Activated T-helper 2 cell treated with anti-CD3 and anti-CD28 coated beads, Interferon-gamma antibody, Interleukin-2, Interleukin-4, amounts not matched to agents 10 μg/mL and 5 μg/mL and 100 μg/mL, durations not matched to agents 14 hours and 24 hours and 36 hours (primary cell): ENCODE measurements at regions of chr4 and their contacts with region 1.

Region 1: DNA sequence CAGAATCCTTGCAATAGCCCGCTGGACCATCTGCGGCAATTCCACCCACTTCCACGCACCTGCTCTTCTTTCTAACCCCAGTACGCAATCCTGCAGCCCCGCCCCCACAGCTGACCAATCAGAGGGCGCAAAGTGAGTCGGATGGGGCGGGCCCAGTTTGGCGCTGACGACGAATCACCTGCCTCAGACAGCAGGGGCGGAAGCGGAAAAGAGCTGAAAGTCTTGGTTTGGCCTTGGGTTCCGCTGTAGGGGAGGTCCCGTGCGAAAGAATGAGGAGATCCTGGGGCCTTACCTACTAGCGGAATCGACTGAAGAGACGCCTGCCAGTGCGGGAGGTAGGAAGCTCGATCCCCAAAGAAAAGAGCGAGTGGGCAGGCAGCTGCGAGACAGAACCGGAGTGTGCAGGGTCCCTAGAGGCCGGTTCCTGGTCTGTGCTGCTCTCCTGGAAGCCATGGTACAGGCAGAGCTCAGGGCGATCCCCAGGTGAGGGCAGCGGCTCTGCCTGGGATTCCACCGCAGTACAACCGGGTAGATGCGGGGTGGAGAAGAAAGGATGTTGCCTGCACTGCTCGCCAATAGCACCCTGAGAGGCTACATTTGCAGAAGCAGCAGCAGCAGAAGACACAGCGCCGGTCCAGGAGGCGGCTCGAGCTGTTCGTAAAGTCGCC is at the start of gene TMEM184C:
- DNase-seq: peak; percentile 97
- H3K4me3 Mint-ChIP-seq: peak within 1 kb of the TSS; percentile 99
- H3K27ac Mint-ChIP-seq: peak within 1 kb of the TSS; percentile 98
- H3K4me1 Mint-ChIP-seq: peaks cover 19% of the 10 kb centered on the region
- H3K27me3 Mint-ChIP-seq: peaks cover 15% of the 10 kb centered on the region
- total RNA-seq, gene TMEM184C: 20.4 and 22.0 TPM in 2 replicates

Region 2: DNA sequence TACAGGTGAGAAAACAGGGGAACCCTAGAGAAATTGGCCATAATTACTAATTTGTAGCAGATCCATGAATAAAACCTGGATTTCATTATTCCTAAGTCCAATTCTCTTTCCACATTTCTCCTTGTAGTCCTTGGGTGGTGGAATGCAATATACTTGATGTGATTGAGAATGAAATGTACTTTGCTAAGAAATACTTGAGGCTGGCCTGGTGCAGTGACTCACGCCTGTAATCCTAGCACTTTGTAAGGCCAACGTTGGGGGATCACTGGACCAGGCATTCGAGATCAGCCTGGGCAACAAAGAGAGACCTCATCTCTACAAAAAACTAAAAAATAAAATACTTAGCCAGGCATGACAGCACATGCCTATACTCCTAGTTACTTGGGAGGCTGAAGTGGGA is 15.8 kb after region 1 on chr4:
- intact Hi-C with region 1: loop called (anchors 1 kb)
- DNase-seq: no peak
- H3K4me3 Mint-ChIP-seq: no peak overlapping the region
- H3K27ac Mint-ChIP-seq: no peak overlapping the region
- H3K4me1 Mint-ChIP-seq: no peaks in the 10 kb centered on the region
- H3K27me3 Mint-ChIP-seq: no peaks in the 10 kb centered on the region

Region 3: GRCh38 chr4:147683717-147684700 is 66.7 kb after region 1 on chr4 and contains the start of gene PRMT9:
- intact Hi-C with region 1: loop called (anchors 1 kb)
- DNase-seq: peak; percentile 84
- H3K4me3 Mint-ChIP-seq: peak within 1 kb of the TSS; percentile 93
- H3K27ac Mint-ChIP-seq: peak within 1 kb of the TSS; percentile 93
- H3K4me1 Mint-ChIP-seq: peaks cover 26% of the 10 kb centered on the region
- H3K27me3 Mint-ChIP-seq: peaks cover 3% of the 10 kb centered on the region
- total RNA-seq, gene PRMT9: 8.4 and 8.9 TPM in 2 replicates

Region 4: DNA sequence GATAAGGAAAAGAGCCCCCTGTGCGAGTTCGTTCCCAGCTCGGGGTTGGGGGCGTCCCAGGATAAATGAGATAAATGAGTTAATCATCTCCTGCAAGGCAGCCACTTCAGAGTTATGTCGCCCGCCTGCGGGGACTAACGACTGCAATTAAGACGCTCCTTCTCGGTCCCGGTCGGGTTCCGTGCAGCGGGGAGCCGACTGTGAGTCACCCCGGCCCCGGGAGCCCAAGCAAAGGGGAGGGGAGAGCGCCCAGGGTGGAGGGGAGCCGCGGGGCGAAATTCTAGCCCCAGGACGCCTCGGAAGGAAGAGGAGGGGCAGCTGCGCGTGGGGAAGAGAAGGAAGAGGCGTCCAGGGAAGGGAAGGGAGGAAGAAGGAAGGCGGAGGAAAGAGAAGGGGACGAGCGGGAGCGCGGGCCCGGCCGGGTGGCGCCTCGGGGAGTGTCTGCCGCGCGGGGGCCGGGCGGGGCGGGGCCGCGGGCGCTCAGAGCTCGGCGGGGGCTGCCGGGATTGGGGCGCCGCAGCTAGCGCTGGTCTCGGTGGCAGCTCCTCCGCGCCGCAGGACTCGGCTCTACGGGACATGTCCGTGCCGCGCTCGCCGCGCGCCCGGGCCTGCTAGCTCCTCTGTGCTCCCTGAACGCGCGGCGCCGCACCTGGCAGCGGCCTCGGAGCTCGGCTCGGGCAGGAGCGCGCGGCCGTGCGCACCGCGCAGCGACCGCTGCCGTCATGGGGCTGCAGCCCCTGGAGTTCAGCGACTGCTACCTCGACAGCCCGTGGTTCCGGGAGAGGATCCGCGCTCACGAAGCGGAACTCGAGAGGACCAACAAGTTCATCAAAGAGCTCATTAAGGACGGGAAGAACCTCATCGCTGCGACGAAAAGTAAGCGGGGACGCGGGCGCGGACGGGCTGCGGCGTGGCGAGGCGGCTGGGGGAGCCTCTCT is 114.5 kb after region 1 on chr4 and contains the start of gene ARHGAP10:
- intact Hi-C with region 1: loop called (anchors 1 kb)
- DNase-seq: peak; percentile 59
- H3K4me3 Mint-ChIP-seq: peak within 1 kb of the TSS; percentile 96
- H3K27ac Mint-ChIP-seq: peak within 1 kb of the TSS; percentile 91
- H3K4me1 Mint-ChIP-seq: peaks cover 44% of the 10 kb centered on the region
- H3K27me3 Mint-ChIP-seq: peaks cover 18% of the 10 kb centered on the region
- total RNA-seq, gene ARHGAP10: 18.5 TPM in 2 replicates

Region 5: DNA sequence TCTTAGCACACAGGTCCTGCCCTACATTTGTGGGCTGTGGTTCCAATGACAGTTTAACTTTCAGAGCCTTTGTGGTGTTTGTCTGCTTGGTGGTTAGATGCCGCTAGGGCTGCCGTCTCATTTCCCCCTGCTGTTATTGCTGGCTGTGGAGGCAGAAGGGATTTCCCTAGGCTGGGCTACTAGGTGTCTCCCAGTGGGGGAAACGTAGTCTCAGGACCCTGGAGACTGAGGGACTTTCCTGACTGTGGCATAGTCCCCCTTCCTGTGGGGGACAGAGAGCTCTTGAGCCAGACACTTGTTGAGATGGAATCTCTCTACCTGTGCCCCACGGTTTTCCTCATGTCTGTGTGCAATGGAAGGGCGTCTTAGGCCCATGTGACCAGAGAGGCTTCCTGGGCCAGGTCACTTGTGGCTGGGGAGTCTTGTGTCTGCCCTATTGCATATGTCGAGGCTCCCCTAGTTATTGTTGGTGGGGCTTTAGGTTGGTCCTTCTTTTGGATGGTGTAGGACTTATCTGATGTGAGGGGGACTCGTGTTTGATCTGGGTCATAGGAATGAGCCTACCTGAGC is 182.8 kb after region 1 on chr4:
- intact Hi-C with region 1: loop called (anchors 10 kb)
- DNase-seq: peak; percentile 70
- H3K4me3 Mint-ChIP-seq: peak overlapping the region; percentile 67
- H3K27ac Mint-ChIP-seq: peak overlapping the region; percentile 93
- H3K4me1 Mint-ChIP-seq: peaks cover 77% of the 10 kb centered on the region
- H3K27me3 Mint-ChIP-seq: no peaks in the 10 kb centered on the region

Region 6: GRCh38 chr4:148261848-148262247 is 644.5 kb after region 1 on chr4:
- intact Hi-C with region 1: no loop called
- DNase-seq: no peak
- H3K4me3 Mint-ChIP-seq: no peak overlapping the region
- H3K27ac Mint-ChIP-seq: no peak overlapping the region
- H3K4me1 Mint-ChIP-seq: no peaks in the 10 kb centered on the region
- H3K27me3 Mint-ChIP-seq: no peaks in the 10 kb centered on the region

Region 7: DNA sequence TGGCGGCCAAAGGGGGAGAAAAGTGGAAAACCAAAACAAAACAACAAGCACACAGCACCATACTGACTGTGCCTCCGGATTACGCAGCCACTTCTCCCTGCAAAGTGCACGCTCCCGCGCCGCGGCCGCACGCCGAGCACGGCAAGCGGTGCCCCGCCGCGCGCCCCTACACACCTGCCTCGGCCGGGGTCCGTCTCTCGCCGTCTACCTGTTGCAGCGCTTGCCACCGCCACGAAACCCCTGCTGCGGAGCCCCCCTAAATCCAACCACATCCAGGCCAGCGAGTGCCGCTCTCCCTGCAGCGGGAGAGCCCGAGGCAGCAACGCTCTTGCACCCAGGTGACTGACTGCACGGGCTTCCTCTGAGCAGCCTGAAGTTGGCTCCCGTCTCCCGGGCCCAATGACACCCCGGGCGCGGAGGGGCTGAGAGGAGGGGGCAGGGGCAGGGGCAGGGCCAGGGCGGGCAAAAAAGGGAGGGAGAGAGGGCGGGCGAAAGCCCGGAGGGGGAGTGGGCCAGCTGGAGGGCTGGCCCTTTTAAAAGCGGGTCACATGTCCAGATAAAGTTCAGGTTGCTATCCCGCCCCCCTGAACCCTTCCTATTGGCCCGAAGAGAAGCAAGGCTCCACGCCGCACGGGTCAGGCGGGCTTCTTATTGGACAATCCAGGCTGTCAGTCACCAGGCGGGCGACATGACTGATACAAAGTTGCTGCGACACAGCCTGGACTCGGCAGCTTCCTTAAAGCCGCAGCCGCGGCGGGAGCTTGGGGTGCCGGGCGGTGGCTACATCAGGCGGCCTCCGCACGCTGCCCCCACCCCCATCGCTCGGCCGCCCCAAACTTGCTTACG is 824.9 kb after region 1 on chr4 and contains the start of gene NR3C2:
- intact Hi-C with region 1: loop called (anchors 5 kb)
- DNase-seq: peak; percentile 95
- H3K4me3 Mint-ChIP-seq: peak within 1 kb of the TSS; percentile 93
- H3K27ac Mint-ChIP-seq: peak within 1 kb of the TSS; percentile 46
- H3K4me1 Mint-ChIP-seq: peaks cover 19% of the 10 kb centered on the region
- H3K27me3 Mint-ChIP-seq: peaks cover 51% of the 10 kb centered on the region
- total RNA-seq, gene NR3C2: 0.21 and 0.32 TPM in 2 replicates